Activated CD4-positive, alpha-beta memory T cell treated with anti-CD3 and anti-CD28 coated beads for 36 hours (primary cell): ENCODE measurements at regions of chr7 and their contacts with region 1.

Region 1: DNA sequence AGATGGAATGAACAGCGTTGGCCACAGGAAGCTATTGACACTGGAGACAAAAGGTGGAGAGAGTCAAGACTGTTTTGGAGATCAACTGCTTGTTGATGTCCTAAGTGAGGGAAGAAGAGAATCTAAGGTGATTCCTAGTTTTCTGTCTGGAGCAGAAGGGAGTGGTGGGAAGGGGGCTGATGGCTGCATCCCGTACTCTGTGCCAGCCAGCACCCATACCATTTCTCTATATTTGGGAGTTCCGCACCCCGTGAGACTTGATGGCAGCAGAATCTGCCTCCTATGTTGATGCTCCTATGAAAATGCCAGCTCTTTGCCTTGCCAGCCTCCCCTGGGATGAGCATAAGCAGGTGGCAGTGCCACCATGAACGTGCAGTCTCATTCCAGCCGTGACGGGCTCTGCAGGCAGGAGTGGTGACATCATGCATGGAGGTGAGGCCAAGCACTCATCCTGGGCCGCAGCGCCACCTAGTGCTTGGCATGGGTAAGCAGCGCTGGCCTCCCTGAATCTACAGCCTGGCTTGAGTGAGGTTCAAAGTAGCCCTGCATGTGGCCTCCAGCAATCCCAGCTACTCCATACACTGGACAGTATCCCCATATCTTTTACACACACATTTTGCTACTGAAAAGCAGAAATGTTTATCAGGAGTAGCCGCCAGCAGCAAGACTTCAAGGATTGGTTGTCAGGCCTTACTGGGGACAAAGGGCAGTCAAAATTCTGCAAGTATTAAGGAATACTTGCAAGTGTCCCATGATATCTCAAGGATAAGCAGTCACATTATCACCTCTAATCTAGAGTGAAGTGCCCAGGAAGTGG is 43.0 kb downstream of the PODXL start:
- DNase-seq: peak; percentile 88
- H3K4me3 Mint-ChIP-seq: no peak overlapping the region
- H3K27ac Mint-ChIP-seq: no peak overlapping the region
- H3K4me1 Mint-ChIP-seq: peaks cover 12% of the 10 kb centered on the region
- H3K27me3 Mint-ChIP-seq: peaks cover 6% of the 10 kb centered on the region

Region 2: DNA sequence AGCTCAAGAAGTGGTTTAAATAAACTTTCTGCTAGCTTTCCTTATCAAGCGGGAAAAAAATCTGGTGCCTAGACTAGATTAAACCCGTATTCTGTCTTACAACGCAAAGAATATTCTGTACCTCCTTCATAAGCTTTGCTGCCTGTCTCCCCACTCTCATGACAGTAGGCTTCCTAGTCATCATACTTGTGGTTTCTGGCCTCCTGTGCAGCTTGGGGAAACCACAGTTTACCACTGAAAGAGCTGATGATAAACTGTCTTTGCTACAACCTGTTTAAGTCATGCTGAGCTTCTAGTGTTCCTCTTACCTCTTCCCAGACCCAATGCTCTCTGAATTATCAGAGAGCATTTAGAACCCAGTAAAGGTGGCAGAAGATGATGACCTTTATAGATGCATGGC is 12.0 kb before region 1 on chr7:
- CTCF ChIA-PET with region 1: interaction called, 10 read pairs
- POLR2A ChIA-PET with region 1: no interaction called
- intact Hi-C with region 1: loop called (anchors 1 kb)
- DNase-seq: peak; percentile 79
- H3K4me3 Mint-ChIP-seq: no peak overlapping the region
- H3K27ac Mint-ChIP-seq: peak overlapping the region; percentile 60
- H3K4me1 Mint-ChIP-seq: peaks cover 30% of the 10 kb centered on the region
- H3K27me3 Mint-ChIP-seq: no peaks in the 10 kb centered on the region